ENCODE measurements at regions of chr18 and their contacts with region 1.

Region 1: GRCh38 chr18:49178736-49179135 is 228.0 kb upstream of the SMAD7 start:
- DNase-seq: peak; percentile 20
- H3K4me3 Mint-ChIP-seq: no peak overlapping the region
- H3K27ac Mint-ChIP-seq: no peak overlapping the region
- H3K4me1 Mint-ChIP-seq: peaks cover 15% of the 10 kb centered on the region
- H3K27me3 Mint-ChIP-seq: no peaks in the 10 kb centered on the region

Region 2: GRCh38 chr18:49021433-49022129 is 157.2 kb before region 1 on chr18:
- CTCF ChIA-PET with region 1: interaction called, 5 read pairs
- intact Hi-C with region 1: loop called (anchors 1 kb)
- DNase-seq: peak; percentile 78
- H3K4me3 Mint-ChIP-seq: no peak overlapping the region
- H3K27ac Mint-ChIP-seq: no peak overlapping the region
- H3K4me1 Mint-ChIP-seq: no peaks in the 10 kb centered on the region
- H3K27me3 Mint-ChIP-seq: no peaks in the 10 kb centered on the region

Region 3: GRCh38 chr18:49161627-49162026 is 17.1 kb before region 1 on chr18:
- CTCF ChIA-PET with region 1: interaction called, 4 read pairs
- intact Hi-C with region 1: loop called (anchors 2 kb)
- DNase-seq: peak; percentile 47
- H3K4me3 Mint-ChIP-seq: no peak overlapping the region
- H3K27ac Mint-ChIP-seq: no peak overlapping the region
- H3K4me1 Mint-ChIP-seq: peaks cover 10% of the 10 kb centered on the region
- H3K27me3 Mint-ChIP-seq: no peaks in the 10 kb centered on the region

Region 4: DNA sequence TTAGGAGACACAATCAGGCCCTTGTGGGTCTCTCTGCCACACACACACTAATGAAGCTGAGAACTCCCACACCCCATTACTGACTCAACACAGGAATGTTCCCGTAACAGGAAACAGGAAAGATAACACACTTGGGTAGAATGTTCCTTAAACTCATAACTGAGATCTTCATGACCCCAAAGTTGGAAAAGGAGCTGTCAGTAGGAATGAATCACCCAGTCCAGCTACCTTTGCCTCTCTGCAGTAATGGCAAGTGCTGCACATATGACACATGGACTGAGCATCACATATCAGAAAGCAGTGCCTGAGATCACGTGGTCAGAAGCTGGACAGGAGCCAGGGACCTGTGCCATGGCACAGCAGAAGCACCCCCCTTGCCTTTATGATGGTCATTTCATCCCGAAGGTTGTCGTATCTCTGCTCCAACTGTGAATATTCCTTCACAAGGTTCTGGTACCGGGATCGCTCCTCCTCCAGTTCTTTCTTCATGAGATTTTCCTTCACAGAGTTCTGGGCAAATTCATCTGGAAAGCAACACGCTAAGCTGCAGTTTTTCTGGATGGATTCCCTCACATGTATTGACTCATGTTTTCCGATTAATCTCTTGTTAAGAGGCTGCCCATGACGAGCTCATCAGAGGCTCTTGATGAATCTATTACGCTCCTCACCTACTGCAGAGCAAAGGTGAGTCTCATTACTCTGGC is 700.0 kb after region 1 on chr18:
- CTCF ChIA-PET with region 1: no interaction called
- intact Hi-C with region 1: no loop called
- DNase-seq: no peak
- H3K4me3 Mint-ChIP-seq: no peak overlapping the region
- H3K27ac Mint-ChIP-seq: no peak overlapping the region
- H3K4me1 Mint-ChIP-seq: no peaks in the 10 kb centered on the region
- H3K27me3 Mint-ChIP-seq: peaks cover 17% of the 10 kb centered on the region

Measured in activated naive CD4-positive, alpha-beta T cell treated with anti-CD3 and anti-CD28 coated beads for 36 hours (primary cell).